Activated B cell treated with CpG ODN at 0.5 μM for 24 hours (primary cell): ENCODE measurements at regions of chr3 and their contacts with region 1.

Region 1: GRCh38 chr3:170180908-170181879 is at the start of gene PHC3:
- DNase-seq: peak; percentile 92
- ATAC-seq: peak; percentile 80
- H3K4me3 Mint-ChIP-seq: peak within 1 kb of the TSS; percentile 96
- H3K27ac Mint-ChIP-seq: peak within 1 kb of the TSS; percentile 98
- H3K4me1 Mint-ChIP-seq: peaks cover 32% of the 10 kb centered on the region
- H3K27me3 Mint-ChIP-seq: no peaks in the 10 kb centered on the region
- CTCF ChIP-seq: no peak
- total RNA-seq, gene PHC3: 105 TPM in 2 replicates

Region 2: GRCh38 chr3:170037463-170038433 is 143.4 kb before region 1 on chr3 and contains the start of gene GPR160:
- CTCF ChIA-PET with region 1: no interaction called
- POLR2A ChIA-PET with region 1: interaction called, 5 read pairs
- intact Hi-C with region 1: loop called (anchors 1 kb)
- DNase-seq: peak; percentile 88
- ATAC-seq: peak; percentile 77
- H3K4me3 Mint-ChIP-seq: peak within 1 kb of the TSS; percentile 93
- H3K27ac Mint-ChIP-seq: peak within 1 kb of the TSS; percentile 88
- H3K4me1 Mint-ChIP-seq: peaks cover 46% of the 10 kb centered on the region
- H3K27me3 Mint-ChIP-seq: no peaks in the 10 kb centered on the region
- CTCF ChIP-seq: peak; percentile 52
- total RNA-seq, gene GPR160: 63.2 and 65.5 TPM in 2 replicates

Region 3: GRCh38 chr3:170144437-170144843 is 36.8 kb before region 1 on chr3:
- CTCF ChIA-PET with region 1: no interaction called
- POLR2A ChIA-PET with region 1: interaction called, 3 read pairs
- intact Hi-C with region 1: loop called (anchors 5 kb)
- DNase-seq: no peak
- ATAC-seq: peak; percentile 90
- H3K4me3 Mint-ChIP-seq: no peak overlapping the region
- H3K27ac Mint-ChIP-seq: peak overlapping the region; percentile 12
- H3K4me1 Mint-ChIP-seq: peaks cover 22% of the 10 kb centered on the region
- H3K27me3 Mint-ChIP-seq: no peaks in the 10 kb centered on the region
- CTCF ChIP-seq: no peak

Region 4: GRCh38 chr3:170154569-170155143 is 26.5 kb before region 1 on chr3:
- CTCF ChIA-PET with region 1: no interaction called
- POLR2A ChIA-PET with region 1: interaction called, 18 read pairs
- intact Hi-C with region 1: loop called (anchors 1 kb)
- DNase-seq: no peak
- ATAC-seq: peak; percentile 87
- H3K4me3 Mint-ChIP-seq: peak overlapping the region; percentile 78
- H3K27ac Mint-ChIP-seq: peak overlapping the region; percentile 99
- H3K4me1 Mint-ChIP-seq: peaks cover 66% of the 10 kb centered on the region
- H3K27me3 Mint-ChIP-seq: no peaks in the 10 kb centered on the region
- CTCF ChIP-seq: no peak

Region 5: DNA sequence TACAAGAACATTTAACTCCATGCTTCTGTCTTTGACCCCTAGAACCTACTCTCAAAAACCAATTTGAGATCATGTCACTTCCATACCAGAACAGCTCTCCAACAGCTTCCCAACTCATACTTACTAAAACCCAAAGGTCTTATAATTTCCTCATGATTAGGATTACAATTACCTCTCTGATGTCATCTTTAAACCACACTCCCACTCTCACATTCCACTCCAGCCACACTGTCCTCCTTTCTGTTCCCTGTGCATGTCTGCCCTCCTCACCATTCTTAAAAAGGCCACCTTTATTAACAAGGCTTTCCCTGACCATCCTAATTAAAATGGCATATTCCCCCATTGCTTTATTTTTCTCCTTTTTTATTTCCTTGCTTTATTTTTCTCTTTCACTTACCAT is 18.6 kb before region 1 on chr3:
- CTCF ChIA-PET with region 1: no interaction called
- POLR2A ChIA-PET with region 1: interaction called, 8 read pairs
- intact Hi-C with region 1: loop called (anchors 2 kb)
- DNase-seq: no peak
- ATAC-seq: no peak
- H3K4me3 Mint-ChIP-seq: no peak overlapping the region
- H3K27ac Mint-ChIP-seq: peak overlapping the region; percentile 37
- H3K4me1 Mint-ChIP-seq: peaks cover 54% of the 10 kb centered on the region
- H3K27me3 Mint-ChIP-seq: no peaks in the 10 kb centered on the region
- CTCF ChIP-seq: no peak

Region 6: GRCh38 chr3:170221924-170222646 is 40.9 kb after region 1 on chr3 and contains the start of gene PRKCI:
- CTCF ChIA-PET with region 1: no interaction called
- POLR2A ChIA-PET with region 1: interaction called, 3 read pairs
- intact Hi-C with region 1: loop called (anchors 2 kb)
- DNase-seq: peak; percentile 64
- ATAC-seq: peak; percentile 94
- H3K4me3 Mint-ChIP-seq: peak within 1 kb of the TSS; percentile 95
- H3K27ac Mint-ChIP-seq: peak within 1 kb of the TSS; percentile 73
- H3K4me1 Mint-ChIP-seq: peaks cover 14% of the 10 kb centered on the region
- H3K27me3 Mint-ChIP-seq: no peaks in the 10 kb centered on the region
- CTCF ChIP-seq: no peak
- total RNA-seq, gene PRKCI: 6.6 and 6.9 TPM in 2 replicates

Region 7: GRCh38 chr3:170869645-170870593 is 688.7 kb after region 1 on chr3 and contains the start of gene RPL22L1:
- CTCF ChIA-PET with region 1: no interaction called
- POLR2A ChIA-PET with region 1: no interaction called
- intact Hi-C with region 1: loop called (anchors 5 kb)
- DNase-seq: peak; percentile 89
- ATAC-seq: peak; percentile 86
- H3K4me3 Mint-ChIP-seq: peak within 1 kb of the TSS; percentile 95
- H3K27ac Mint-ChIP-seq: peak within 1 kb of the TSS; percentile 97
- H3K4me1 Mint-ChIP-seq: peaks cover 34% of the 10 kb centered on the region
- H3K27me3 Mint-ChIP-seq: no peaks in the 10 kb centered on the region
- CTCF ChIP-seq: no peak
- total RNA-seq, gene RPL22L1: 109 and 124 TPM in 2 replicates